ENCODE measurements at regions of chr6 and their contacts with region 1.

Region 1: GRCh38 chr6:23547701-23548161 is 578.3 kb upstream of the NRSN1 start:
- DNase-seq: peak; percentile 23
- H3K4me3 Mint-ChIP-seq: no peak overlapping the region
- H3K27ac Mint-ChIP-seq: no peak overlapping the region
- H3K4me1 Mint-ChIP-seq: no peaks in the 10 kb centered on the region
- H3K27me3 Mint-ChIP-seq: no peaks in the 10 kb centered on the region
- CTCF ChIP-seq: no peak

Region 2: GRCh38 chr6:23587582-23587981 is 39.9 kb after region 1 on chr6:
- CTCF ChIA-PET with region 1: no interaction called
- intact Hi-C with region 1: no loop called
- DNase-seq: no peak
- H3K4me3 Mint-ChIP-seq: no peak overlapping the region
- H3K27ac Mint-ChIP-seq: no peak overlapping the region
- H3K4me1 Mint-ChIP-seq: no peaks in the 10 kb centered on the region
- H3K27me3 Mint-ChIP-seq: no peaks in the 10 kb centered on the region
- CTCF ChIP-seq: no peak

Region 3: GRCh38 chr6:23650676-23651075 is 102.9 kb after region 1 on chr6:
- CTCF ChIA-PET with region 1: no interaction called
- intact Hi-C with region 1: loop called (anchors 2 kb)
- DNase-seq: peak; percentile 65
- H3K4me3 Mint-ChIP-seq: no peak overlapping the region
- H3K27ac Mint-ChIP-seq: peak overlapping the region; percentile 1
- H3K4me1 Mint-ChIP-seq: peaks cover 34% of the 10 kb centered on the region
- H3K27me3 Mint-ChIP-seq: no peaks in the 10 kb centered on the region
- CTCF ChIP-seq: no peak

Region 4: DNA sequence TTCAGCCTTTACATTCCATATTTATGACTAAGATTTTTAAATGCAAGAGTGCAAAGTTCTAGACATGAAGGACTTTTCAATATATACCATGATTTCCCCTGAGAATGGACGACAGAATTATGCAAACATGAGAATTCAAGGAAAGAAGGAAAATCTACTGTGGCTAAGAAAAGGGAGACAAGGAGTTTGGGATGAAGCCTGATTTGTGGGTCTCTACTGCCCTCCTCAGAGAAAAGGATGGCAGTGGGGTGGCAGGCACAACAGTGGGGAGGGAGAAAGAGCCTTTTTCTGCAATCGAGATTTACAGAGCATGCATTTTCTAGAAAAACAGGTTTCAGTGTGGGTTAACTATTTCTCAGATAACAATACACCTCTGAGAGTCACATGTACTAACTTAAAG is 111.4 kb after region 1 on chr6:
- CTCF ChIA-PET with region 1: no interaction called
- intact Hi-C with region 1: loop called (anchors 2 kb)
- DNase-seq: peak; percentile 66
- H3K4me3 Mint-ChIP-seq: no peak overlapping the region
- H3K27ac Mint-ChIP-seq: no peak overlapping the region
- H3K4me1 Mint-ChIP-seq: peaks cover 26% of the 10 kb centered on the region
- H3K27me3 Mint-ChIP-seq: no peaks in the 10 kb centered on the region
- CTCF ChIP-seq: peak; percentile 63